ENCODE measurements at regions of chrX and their contacts with region 1.

Region 1: DNA sequence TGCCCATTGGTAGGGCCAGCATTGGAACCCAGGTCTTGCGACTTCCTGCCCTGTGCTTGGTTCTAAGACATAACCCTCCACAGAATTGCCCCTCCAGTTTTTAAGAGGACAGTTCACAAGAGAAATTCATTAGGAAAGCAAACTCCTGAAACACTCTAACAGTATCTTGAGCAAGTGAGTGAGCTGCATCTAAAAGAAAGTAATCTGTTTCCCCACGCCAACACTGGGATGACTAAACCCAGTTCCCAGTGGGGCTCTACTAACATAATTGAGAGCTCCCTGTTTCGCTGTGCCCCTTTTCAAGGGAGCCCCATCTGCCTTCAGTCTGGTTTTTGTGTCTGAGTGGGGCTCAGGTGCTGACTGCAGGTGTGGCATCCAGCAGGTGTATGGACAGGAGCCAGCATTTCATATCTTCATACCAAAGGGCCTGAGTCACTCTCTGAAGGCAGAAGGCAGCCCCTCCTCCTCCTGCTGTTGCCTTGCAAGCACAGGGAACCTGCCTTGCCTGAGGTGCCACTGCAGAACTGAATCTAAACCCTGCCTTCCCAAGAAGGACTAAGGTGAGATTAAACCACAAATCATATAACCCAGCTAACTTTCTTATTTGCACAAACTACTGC is 8.0 kb downstream of the AMOT start:
- DNase-seq: no peak
- H3K4me3 ChIP-seq: no peak overlapping the region
- H3K27ac ChIP-seq: peak overlapping the region; percentile 83
- H3K4me1 ChIP-seq: no peaks in the 10 kb centered on the region
- H3K27me3 ChIP-seq: no peaks in the 10 kb centered on the region
- CTCF ChIP-seq: no peak

Region 2: GRCh38 chrX:112313201-112313600 is 519.4 kb before region 1 on chrX:
- CTCF ChIA-PET with region 1: no interaction called
- POLR2A ChIA-PET with region 1: no interaction called
- intact Hi-C with region 1: no loop called
- DNase-seq: no peak
- H3K4me3 ChIP-seq: no peak overlapping the region
- H3K27ac ChIP-seq: no peak overlapping the region
- H3K4me1 ChIP-seq: no peaks in the 10 kb centered on the region
- H3K27me3 ChIP-seq: no peaks in the 10 kb centered on the region
- CTCF ChIP-seq: no peak

Region 3: DNA sequence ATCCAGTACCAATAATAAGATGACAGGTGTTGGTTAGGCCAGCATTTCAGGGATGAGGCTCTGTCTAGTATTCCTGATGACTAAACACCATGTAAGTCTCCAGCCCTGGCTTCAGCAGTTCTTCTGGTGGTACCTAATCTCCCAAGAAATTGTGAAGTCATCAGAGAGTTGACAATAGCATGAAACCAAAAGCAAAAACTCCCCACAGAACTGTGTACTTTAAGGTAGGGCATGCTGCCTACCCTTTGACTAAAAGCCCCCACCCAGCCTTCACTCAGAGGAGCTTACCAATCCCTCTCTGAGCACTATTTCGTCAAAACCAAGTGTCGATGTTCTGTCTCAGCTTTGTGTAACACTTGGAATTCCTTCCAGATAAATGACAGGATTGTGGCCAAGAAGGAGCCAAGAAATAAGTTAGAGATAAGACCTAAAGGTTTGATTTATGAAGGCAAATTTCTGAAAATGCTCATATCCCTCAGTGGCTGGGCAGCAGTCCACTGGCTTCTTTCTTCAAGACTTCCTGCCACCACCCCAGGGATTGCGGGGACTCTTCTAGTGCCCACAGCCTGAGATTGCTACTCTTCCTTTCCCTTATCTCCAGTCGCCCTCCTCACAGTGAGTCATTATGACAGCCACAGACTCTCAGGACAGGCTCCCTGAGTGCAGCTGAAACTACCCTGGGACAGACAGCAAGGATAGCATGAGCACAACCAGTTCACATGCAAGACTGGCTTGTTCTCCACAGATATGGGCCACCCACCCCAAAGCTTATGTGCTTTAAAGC is 85.6 kb before region 1 on chrX:
- CTCF ChIA-PET with region 1: no interaction called
- POLR2A ChIA-PET with region 1: no interaction called
- intact Hi-C with region 1: no loop called
- DNase-seq: no peak
- H3K4me3 ChIP-seq: no peak overlapping the region
- H3K27ac ChIP-seq: no peak overlapping the region
- H3K4me1 ChIP-seq: no peaks in the 10 kb centered on the region
- H3K27me3 ChIP-seq: no peaks in the 10 kb centered on the region
- CTCF ChIP-seq: no peak

Region 4: DNA sequence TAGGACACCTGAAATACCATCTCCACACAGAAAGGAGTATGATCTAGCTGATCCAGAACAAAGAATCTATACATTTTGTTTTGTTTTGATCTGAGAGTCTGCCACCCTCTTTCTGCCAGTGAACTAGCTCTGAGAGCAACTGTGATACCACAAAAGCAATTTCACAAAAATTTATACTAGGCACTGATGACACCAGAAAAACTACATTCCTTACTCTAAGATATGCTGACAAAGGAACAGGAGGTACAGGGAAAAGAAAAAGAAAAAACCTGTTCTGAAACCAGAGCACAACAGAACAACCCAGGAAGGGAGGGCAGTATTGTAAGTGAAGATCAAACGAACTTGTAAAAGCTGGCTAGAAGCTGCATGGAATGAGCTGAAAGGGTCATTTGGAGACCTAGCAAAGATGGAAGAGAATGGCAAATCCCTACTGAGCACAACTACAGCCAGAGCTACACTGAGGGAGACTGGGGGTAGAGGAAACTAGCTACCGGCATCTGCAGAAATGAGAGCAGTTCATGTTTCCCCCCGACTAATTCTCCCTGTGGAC is 23.9 kb before region 1 on chrX:
- CTCF ChIA-PET with region 1: no interaction called
- POLR2A ChIA-PET with region 1: no interaction called
- intact Hi-C with region 1: loop called (anchors 2 kb)
- DNase-seq: no peak
- H3K4me3 ChIP-seq: no peak overlapping the region
- H3K27ac ChIP-seq: no peak overlapping the region
- H3K4me1 ChIP-seq: no peaks in the 10 kb centered on the region
- H3K27me3 ChIP-seq: no peaks in the 10 kb centered on the region
- CTCF ChIP-seq: no peak

Region 5: DNA sequence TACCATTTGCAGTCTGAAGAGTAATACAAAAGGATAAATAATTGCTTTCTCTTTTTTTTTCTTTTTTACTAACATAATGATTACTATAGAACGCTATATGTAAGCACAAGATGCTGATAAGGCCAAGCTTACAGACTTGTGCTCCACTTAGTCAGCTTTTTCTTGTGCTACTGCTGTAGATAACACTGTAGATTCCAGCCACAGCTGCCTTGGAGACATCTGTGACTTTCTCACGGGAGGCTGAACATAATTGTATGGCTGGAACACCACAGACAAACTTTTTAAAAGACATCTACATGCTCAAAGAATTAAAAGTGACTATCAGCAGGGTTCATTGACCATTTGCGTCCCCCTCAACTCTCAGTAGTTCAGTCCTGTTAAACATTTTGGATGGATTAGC is 389.7 kb after region 1 on chrX:
- CTCF ChIA-PET with region 1: no interaction called
- POLR2A ChIA-PET with region 1: no interaction called
- intact Hi-C with region 1: no loop called
- DNase-seq: no peak
- H3K4me3 ChIP-seq: no peak overlapping the region
- H3K27ac ChIP-seq: no peak overlapping the region
- H3K4me1 ChIP-seq: no peaks in the 10 kb centered on the region
- H3K27me3 ChIP-seq: peaks cover 3% of the 10 kb centered on the region
- CTCF ChIP-seq: no peak

Region 6: DNA sequence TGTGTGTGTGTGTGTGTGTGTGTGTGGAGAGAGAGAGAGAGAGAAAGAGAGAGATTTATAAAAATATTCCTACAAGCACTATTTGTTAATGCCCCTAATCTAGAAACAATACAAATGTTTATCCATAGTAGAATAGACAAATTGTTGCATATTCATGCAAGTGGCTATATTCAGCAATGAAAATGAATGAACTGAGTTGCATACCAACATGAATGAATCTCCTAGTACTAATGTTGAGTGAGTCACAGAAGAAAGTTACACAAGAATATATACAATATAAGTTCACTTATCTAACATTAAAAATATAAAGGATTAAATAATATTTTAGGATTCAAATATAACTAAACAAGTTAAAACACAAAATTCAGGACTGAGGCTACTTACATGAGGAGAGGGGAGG is 464.8 kb after region 1 on chrX:
- CTCF ChIA-PET with region 1: no interaction called
- POLR2A ChIA-PET with region 1: no interaction called
- intact Hi-C with region 1: no loop called
- DNase-seq: no peak
- H3K4me3 ChIP-seq: no peak overlapping the region
- H3K27ac ChIP-seq: no peak overlapping the region
- H3K4me1 ChIP-seq: no peaks in the 10 kb centered on the region
- H3K27me3 ChIP-seq: no peaks in the 10 kb centered on the region
- CTCF ChIP-seq: no peak

Measured in A673 (cell line).